ENCODE measurements at regions of chr17 and their contacts with region 1.

Region 1: GRCh38 chr17:40854159-40854814 is 12.7 kb downstream of the KRT12 start:
- DNase-seq: peak; percentile 71
- ATAC-seq: peak; percentile 71
- H3K4me3 ChIP-seq: no peak overlapping the region
- H3K27ac ChIP-seq: peak overlapping the region; percentile 25; the same call in 1 of the 2 replicates
- H3K4me1 ChIP-seq: peaks cover 11 to 50% of the 10 kb centered on the region in 2 experiments
- H3K27me3 ChIP-seq: no peaks in the 10 kb centered on the region
- CTCF ChIP-seq: no peak
- POLR2A ChIP-seq: no peak
- RAD21 ChIP-seq: 0 out of 2 replicates have a peak, but pooled peaks have one; percentile 17

Region 2: DNA sequence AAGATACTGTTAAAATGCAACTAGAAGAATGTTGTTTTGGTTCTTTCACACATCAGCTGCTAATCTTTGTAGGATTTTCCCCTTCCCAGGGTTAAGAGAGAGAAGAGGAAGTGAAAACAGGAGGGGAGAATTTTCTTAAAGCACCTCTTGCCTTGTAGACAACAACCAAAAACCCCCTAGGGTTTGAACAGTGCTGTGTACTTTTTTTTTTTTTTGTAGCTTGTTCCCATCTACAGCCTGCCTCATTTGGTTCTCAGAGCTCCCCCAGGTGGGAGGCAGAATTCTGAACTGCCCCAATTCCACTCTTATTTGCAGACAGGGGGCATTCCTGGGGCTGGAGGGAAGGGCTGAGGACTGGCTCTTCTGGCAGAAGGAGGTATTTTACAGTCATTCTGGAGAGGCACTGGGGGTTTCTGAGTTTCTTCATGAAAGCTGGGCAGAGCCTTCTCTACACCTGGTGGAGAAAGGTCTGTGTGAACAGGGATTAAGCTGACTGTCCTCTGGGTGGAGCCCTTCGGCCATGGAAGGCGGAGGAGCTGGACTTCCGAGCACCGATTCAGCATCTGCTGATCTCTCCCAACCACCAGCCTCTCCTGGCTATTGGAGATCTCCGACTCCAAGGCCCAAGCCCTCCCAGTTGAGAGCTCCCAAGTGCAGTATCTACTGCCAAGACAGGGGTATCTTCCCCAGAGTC is 238.8 kb before region 1 on chr17:
- CTCF ChIA-PET with region 1: interaction called, 19 read pairs
- POLR2A ChIA-PET with region 1: no interaction called
- RAD21 ChIA-PET with region 1: interaction called in 1 of 2 experiments, 5 read pairs
- intact Hi-C with region 1: no loop called
- DNase-seq: peak; percentile 69
- ATAC-seq: peak; percentile 90
- H3K4me3 ChIP-seq: no peak overlapping the region
- H3K27ac ChIP-seq: no peak overlapping the region
- H3K4me1 ChIP-seq: peaks cover 1 to 17% of the 10 kb centered on the region in 2 experiments; a peak in 3 of 4 replicates
- H3K27me3 ChIP-seq: no peaks in the 10 kb centered on the region
- CTCF ChIP-seq: peak; percentile 72 to 95 (median 75)
- POLR2A ChIP-seq: no peak
- RAD21 ChIP-seq: peak; percentile 87

Region 3: DNA sequence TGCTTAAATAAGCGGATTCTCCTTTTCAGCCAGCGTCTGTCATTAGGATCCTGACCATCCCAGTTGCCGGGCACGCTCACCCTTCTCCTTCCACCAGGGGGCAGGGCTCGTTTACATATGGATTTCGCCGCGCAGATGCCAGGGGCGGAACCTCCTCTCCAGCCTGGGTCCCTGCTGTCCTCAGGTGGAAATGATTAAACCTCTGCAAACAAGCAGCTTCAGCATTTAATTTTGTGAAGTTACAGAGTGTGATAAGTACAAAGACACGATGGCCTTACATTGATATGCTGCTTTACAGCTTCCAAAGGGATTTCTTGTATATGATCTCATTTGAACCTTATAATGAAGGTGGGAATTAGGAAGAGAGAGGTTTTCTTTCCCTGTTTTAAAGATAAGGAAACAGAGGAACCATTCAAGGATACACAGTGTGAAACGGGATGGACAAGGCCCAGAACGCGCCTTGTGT is 50.6 kb before region 1 on chr17:
- CTCF ChIA-PET with region 1: interaction called, 3 read pairs
- POLR2A ChIA-PET with region 1: no interaction called
- RAD21 ChIA-PET with region 1: no interaction called
- intact Hi-C with region 1: loop called (anchors 2 kb)
- DNase-seq: peak; percentile 74
- ATAC-seq: peak; percentile 99
- H3K4me3 ChIP-seq: no peak overlapping the region
- H3K27ac ChIP-seq: no peak overlapping the region
- H3K4me1 ChIP-seq: peaks cover 3 to 9% of the 10 kb centered on the region in 2 experiments; a peak in 3 of 4 replicates
- H3K27me3 ChIP-seq: no peaks in the 10 kb centered on the region
- CTCF ChIP-seq: peak; percentile 82 to 96 (median 88)
- POLR2A ChIP-seq: no peak
- RAD21 ChIP-seq: peak; percentile 98

Region 4: DNA sequence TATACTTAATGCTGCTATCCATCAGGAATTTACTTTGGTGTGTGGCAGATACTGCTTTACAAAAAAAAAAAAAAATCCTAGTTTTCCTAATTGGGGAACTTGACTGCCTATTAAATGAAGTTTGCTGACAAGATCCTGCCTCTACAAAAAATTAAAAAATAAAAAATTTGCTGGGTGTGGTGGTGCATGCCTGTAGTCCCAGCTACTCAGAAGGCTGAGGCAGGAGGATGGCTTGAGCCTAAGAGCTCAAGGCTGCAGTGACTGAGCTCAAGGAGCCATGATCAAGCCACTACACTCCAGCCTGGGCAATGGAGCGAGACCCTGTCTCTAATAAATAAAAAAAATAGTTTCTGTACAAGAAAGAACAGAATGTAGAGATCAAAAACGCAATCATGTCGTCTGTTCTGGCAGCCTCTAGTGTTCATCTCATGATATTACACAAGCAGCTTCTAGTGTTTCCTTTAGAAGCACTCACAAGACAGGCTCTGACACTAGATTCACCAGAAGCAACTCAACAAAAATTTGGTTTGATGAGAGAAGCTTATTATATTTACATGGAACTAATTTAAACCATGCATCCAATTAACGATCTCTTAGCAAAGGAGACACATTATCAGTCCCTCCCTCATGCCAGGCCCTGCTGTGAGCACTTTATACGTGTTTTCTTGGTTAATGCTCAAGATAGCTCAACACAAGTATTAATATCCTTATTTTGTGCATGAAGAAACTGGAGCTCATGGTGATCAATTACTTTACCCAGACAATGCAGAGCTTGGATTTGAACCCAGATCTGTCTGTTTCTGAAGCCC is 468.0 kb after region 1 on chr17:
- CTCF ChIA-PET with region 1: interaction called, 14 read pairs
- POLR2A ChIA-PET with region 1: no interaction called
- RAD21 ChIA-PET with region 1: no interaction called
- intact Hi-C with region 1: loop called (anchors 2 kb)
- DNase-seq: peak; percentile 35
- ATAC-seq: peak; percentile 46
- H3K4me3 ChIP-seq: no peak overlapping the region
- H3K27ac ChIP-seq: peak overlapping the region; percentile 35
- H3K4me1 ChIP-seq: peaks cover 5 to 18% of the 10 kb centered on the region in 2 experiments; a peak in 3 of 4 replicates
- H3K27me3 ChIP-seq: no peaks in the 10 kb centered on the region
- CTCF ChIP-seq: peak; percentile 52 to 67 (median 61); a peak in 5 of 6 replicates
- POLR2A ChIP-seq: no peak
- RAD21 ChIP-seq: peak; percentile 82

Region 5: GRCh38 chr17:41496820-41497408 is 642.6 kb after region 1 on chr17:
- CTCF ChIA-PET with region 1: interaction called, 17 read pairs
- POLR2A ChIA-PET with region 1: no interaction called
- RAD21 ChIA-PET with region 1: no interaction called
- intact Hi-C with region 1: loop called (anchors 1 kb)
- DNase-seq: peak; percentile 87
- ATAC-seq: peak; percentile 93
- H3K4me3 ChIP-seq: peak overlapping the region in 1 of 2 experiments; percentile 25; a peak in 1 of 4 replicates
- H3K27ac ChIP-seq: peak overlapping the region; percentile 61
- H3K4me1 ChIP-seq: peaks cover 34 to 90% of the 10 kb centered on the region in 2 experiments
- H3K27me3 ChIP-seq: no peaks in the 10 kb centered on the region
- CTCF ChIP-seq: peak; percentile 94 to 96 (median 95)
- POLR2A ChIP-seq: peak; percentile 74
- RAD21 ChIP-seq: peak; percentile 100

Region 6: DNA sequence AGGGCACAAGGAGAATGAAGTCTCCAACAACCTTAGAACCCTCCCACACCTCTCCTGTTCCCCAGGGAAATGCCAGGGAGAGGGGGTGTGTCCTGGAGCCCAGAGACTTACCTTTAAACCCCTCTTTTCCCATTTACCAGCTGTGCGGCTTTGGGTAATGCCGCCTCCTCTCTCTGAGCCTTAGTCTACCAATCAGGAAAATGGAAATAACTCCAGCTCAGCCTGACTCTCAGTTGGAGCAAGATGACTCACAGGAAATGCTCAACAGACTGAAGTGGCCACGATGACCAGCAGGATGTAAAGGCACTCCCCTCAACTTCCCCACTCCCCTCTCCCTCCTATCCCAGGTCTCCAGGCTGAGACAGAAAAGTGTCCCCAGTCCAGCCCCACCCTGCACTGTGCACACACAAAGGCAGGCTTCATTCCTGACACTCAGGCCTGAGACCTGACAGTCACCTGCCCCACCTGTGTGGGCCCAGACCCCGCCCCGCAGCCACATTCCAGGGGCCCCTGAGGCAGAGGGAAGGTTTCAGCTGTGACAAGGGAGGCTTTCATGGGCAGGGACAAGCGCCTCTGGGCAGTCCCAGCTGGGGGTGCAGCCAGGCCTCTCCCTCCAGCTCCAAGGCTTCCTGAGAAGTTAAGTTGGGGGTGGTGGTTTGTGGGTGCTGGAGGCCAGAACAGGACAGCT is 667.4 kb after region 1 on chr17:
- CTCF ChIA-PET with region 1: no interaction called
- POLR2A ChIA-PET with region 1: interaction called, 7 read pairs
- RAD21 ChIA-PET with region 1: no interaction called
- intact Hi-C with region 1: loop called (anchors 1 kb)
- DNase-seq: peak; percentile 97
- ATAC-seq: peak; percentile 65
- H3K4me3 ChIP-seq: peak overlapping the region; percentile 36 to 47
- H3K27ac ChIP-seq: peak overlapping the region; percentile 99
- H3K4me1 ChIP-seq: peaks cover 74 to 91% of the 10 kb centered on the region in 2 experiments
- H3K27me3 ChIP-seq: no peaks in the 10 kb centered on the region
- CTCF ChIP-seq: no peak; a peak in 1 of 6 replicates
- POLR2A ChIP-seq: no peak
- RAD21 ChIP-seq: no peak